ENCODE measurements at regions of chr9 and their contacts with region 1.

Region 1: DNA sequence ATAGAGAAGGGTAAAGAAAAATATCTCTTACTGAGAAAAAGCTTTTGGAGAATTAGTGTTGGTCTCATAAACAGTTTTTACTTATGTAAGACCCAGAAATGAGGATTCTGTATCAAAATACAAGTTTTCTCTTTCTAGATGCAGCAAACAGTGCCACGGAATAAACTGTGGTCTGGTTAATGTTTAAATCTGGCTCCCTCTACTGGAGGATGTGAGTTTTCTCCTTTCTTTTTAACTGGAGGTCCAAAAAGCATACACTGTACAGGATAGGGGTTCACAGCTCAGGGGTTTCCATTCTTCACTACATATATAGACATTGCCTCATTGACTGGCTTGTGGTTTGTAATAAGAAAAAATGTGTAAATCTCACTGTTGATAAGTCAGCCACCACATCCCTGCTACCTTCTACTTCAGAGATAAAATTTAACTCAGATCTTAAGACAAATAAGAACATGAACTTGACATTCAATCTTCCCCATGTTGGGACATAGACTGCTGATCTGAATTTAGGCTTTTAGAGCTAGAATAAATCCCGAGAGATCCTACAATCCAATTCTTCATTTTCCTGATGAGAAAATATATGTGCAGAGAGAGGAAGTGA is 98.9 kb downstream of the CFAP95 start:
- DNase-seq: peak; percentile 60
- H3K4me3 ChIP-seq: no peak overlapping the region
- H3K27ac ChIP-seq: no peak overlapping the region
- H3K4me1 ChIP-seq: peaks cover 5% of the 10 kb centered on the region
- H3K27me3 ChIP-seq: peaks cover 29 to 39% of the 10 kb centered on the region in 2 experiments
- CTCF ChIP-seq: peak; percentile 49 to 53
- POLR2A ChIP-seq: no peak

Region 2: DNA sequence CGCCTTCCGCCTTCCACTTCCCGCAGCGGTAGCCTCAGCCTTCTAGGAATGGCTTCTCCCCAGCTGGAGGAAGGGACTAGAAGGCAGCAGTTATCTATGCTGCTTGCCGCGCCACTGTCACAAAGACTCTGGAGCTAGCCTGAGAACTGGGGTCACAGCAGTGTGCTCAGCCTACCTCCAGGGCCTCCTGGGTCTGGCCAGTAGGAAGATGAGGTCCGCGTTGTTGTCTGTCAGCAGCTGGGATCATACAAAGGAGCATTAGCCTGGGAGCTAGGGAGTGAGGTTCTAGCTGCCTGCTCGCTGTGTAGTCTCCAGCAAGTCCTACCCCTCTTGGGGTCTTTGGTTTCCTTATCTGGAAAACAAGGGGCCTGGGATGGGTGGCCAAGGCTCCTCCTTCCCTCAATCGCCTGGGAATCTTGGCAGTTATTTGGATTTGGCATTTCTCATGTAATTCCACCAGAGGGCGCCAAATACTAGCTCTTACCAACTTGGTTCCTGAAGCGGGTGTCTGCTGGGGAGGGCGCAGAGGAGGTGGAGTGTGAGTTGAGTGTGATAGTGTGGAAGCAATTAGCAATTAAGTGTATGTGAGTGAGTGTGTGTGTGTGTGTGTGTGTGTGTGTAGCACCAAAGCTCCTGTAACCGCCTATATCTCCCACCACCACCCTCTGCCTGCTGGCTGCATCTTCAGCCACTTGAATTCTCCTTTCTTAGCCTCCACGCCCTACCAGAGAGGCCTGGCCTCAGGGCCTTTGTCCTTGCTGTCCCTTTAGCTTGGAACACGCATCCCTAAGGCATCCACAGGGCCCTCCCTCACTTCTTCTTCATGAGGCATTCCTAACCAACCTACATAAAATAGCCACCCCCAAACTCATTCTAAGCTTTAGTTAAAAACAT is 497.4 kb before region 1 on chr9:
- CTCF ChIA-PET with region 1: interaction called, 32 read pairs
- POLR2A ChIA-PET with region 1: no interaction called
- dilution Hi-C with region 1: no loop called
- intact Hi-C with region 1: loop called (anchors 5 kb)
- DNase-seq: peak; percentile 66
- H3K4me3 ChIP-seq: no peak overlapping the region
- H3K27ac ChIP-seq: no peak overlapping the region
- H3K4me1 ChIP-seq: no peaks in the 10 kb centered on the region
- H3K27me3 ChIP-seq: peaks cover 2% of the 10 kb centered on the region in 2 experiments
- CTCF ChIP-seq: peak; percentile 58 to 66
- POLR2A ChIP-seq: no peak

Region 3: GRCh38 chr9:69745716-69746437 is 173.7 kb before region 1 on chr9:
- CTCF ChIA-PET with region 1: interaction called, 30 read pairs
- POLR2A ChIA-PET with region 1: no interaction called
- dilution Hi-C with region 1: no loop called
- intact Hi-C with region 1: loop called (anchors 5 kb)
- DNase-seq: peak; percentile 34
- H3K4me3 ChIP-seq: no peak overlapping the region
- H3K27ac ChIP-seq: no peak overlapping the region
- H3K4me1 ChIP-seq: peaks cover 3% of the 10 kb centered on the region
- H3K27me3 ChIP-seq: no peaks in the 10 kb centered on the region
- CTCF ChIP-seq: peak in 1 of 2 donors; percentile 8
- POLR2A ChIP-seq: no peak

Region 4: GRCh38 chr9:69867081-69867814 is 52.3 kb before region 1 on chr9:
- CTCF ChIA-PET with region 1: interaction called, 20 read pairs
- POLR2A ChIA-PET with region 1: no interaction called
- dilution Hi-C with region 1: no loop called
- intact Hi-C with region 1: no loop called
- DNase-seq: peak; percentile 84
- H3K4me3 ChIP-seq: no peak overlapping the region
- H3K27ac ChIP-seq: no peak overlapping the region
- H3K4me1 ChIP-seq: peaks cover 19% of the 10 kb centered on the region
- H3K27me3 ChIP-seq: peaks cover 13 to 26% of the 10 kb centered on the region in 2 experiments
- CTCF ChIP-seq: no peak
- POLR2A ChIP-seq: peak; percentile 52

Region 5: DNA sequence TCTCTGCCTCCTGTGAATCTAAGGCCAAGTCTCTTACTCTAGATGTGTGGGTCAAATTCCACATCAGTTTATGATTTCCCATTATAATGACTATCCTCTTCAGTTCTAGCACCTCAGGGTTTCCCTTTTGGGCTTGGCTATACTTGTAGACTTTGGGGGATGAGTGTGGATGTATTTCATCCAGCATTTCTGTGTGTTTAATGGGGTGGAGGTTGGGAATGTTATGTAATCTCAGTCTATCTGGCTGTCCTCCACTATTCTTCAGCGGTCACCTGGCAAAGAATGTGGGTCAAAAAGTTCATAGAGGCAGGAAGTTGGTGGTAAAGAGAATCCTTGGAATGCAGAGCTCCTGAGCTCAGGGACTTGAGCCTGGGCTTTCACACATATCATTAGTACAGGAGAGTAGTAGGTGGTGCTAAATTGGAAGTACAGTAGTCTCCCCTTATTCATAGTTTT is 34.1 kb before region 1 on chr9:
- CTCF ChIA-PET with region 1: interaction called, 13 read pairs
- POLR2A ChIA-PET with region 1: no interaction called
- dilution Hi-C with region 1: no loop called
- intact Hi-C with region 1: no loop called
- DNase-seq: peak; percentile 67
- H3K4me3 ChIP-seq: no peak overlapping the region
- H3K27ac ChIP-seq: peak overlapping the region; percentile 52
- H3K4me1 ChIP-seq: peaks cover 17% of the 10 kb centered on the region
- H3K27me3 ChIP-seq: no peaks in the 10 kb centered on the region
- CTCF ChIP-seq: no peak
- POLR2A ChIP-seq: no peak

Region 6: GRCh38 chr9:69932901-69933300 is 13.3 kb after region 1 on chr9:
- CTCF ChIA-PET with region 1: interaction called, 13 read pairs
- POLR2A ChIA-PET with region 1: no interaction called
- dilution Hi-C with region 1: no loop called
- intact Hi-C with region 1: no loop called
- DNase-seq: peak; percentile 44
- H3K4me3 ChIP-seq: no peak overlapping the region
- H3K27ac ChIP-seq: no peak overlapping the region
- H3K4me1 ChIP-seq: no peaks in the 10 kb centered on the region
- H3K27me3 ChIP-seq: peaks cover 4% of the 10 kb centered on the region in 2 experiments
- CTCF ChIP-seq: peak; percentile 28 to 48
- POLR2A ChIP-seq: no peak